K562 (cell line): ENCODE measurements at regions of chr19 and their contacts with region 1.

Region 1: GRCh38 chr19:17419621-17420466 is at the start of gene MVB12A:
- DNase-seq: peak; percentile 97 to 99 (median 98)
- ATAC-seq: peak; percentile 96
- H3K4me3 ChIP-seq: peak within 1 kb of the TSS; percentile 70
- H3K27ac ChIP-seq: peak within 1 kb of the TSS; percentile 72
- H3K4me1 ChIP-seq: peaks cover 7 to 26% of the 10 kb centered on the region in 2 experiments; a peak in 3 of 5 replicates
- H3K27me3 ChIP-seq: no peaks in the 10 kb centered on the region
- CTCF ChIP-seq: 0 out of 6 replicates have a peak, but pooled peaks of 1 of the 3 experiments have one; percentile 0
- EP300 ChIP-seq: no peak
- POLR2A ChIP-seq: peak; percentile 69
- RAD21 ChIP-seq: no peak
- polyA plus RNA-seq, gene MVB12A: 1.2 to 1.7 TPM

Region 2: GRCh38 chr19:17394891-17395415 is 24.9 kb before region 1 on chr19:
- CTCF ChIA-PET with region 1: interaction called, 10 read pairs
- POLR2A ChIA-PET with region 1: interaction called, 3 read pairs
- in situ Hi-C with region 1: no loop called
- intact Hi-C with region 1: loop called (anchors 2 kb)
- DNase-seq: peak; percentile 83 to 91 (median 85)
- ATAC-seq: peak; percentile 72
- H3K4me3 ChIP-seq: no peak overlapping the region
- H3K27ac ChIP-seq: no peak overlapping the region; the same call in 1 of the 3 replicates
- H3K4me1 ChIP-seq: peaks cover 30 to 50% of the 10 kb centered on the region in 2 experiments
- H3K27me3 ChIP-seq: no peaks in the 10 kb centered on the region
- CTCF ChIP-seq: peak; percentile 83 to 88 (median 85)
- EP300 ChIP-seq: peak; percentile 37; the same call in 1 of the 2 replicates
- POLR2A ChIP-seq: peak; percentile 47; the same call in 1 of the 2 replicates
- RAD21 ChIP-seq: peak; percentile 85 to 94

Region 3: DNA sequence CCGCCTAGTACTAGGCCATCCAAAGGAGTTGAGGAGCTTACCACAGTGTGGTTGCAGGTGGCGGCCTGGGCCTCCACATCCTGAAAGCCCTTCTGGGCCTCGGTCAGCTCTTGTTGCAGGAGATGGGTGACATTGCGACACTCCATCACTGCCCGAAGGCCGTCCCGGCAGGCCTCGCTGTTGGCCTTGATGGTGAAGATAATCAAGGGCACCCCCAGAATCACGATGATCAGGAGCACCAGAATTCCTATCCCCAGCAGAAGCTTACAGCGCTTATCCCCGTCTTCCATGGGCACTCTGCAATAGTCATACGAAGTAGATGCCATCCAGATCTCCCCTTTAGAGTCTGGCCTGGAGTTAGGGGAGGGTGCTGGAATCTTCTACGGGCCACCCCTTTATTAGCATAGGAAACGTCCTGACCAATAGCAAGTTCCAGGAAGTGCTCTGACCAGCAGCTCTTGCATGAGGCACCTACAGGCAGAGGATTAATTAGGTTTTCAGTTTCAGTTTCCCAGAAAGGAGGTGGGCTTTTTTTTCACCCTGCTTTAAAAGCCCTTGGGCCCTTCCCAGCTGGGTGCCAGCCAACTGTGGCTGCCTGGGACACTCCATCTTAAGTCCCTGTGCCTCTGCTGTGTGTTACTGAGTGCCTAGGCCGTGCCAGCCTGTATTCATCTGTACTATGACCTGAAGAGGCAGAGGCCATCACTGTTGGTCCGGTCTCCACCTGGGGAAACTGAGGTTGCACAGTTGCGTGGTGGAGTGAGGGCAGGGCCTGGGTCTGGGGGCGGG is 14.4 kb before region 1 on chr19 and contains the start of gene BST2:
- CTCF ChIA-PET with region 1: no interaction called
- POLR2A ChIA-PET with region 1: interaction called, 20 read pairs
- in situ Hi-C with region 1: no loop called
- intact Hi-C with region 1: loop called (anchors 1 kb)
- DNase-seq: peak; percentile 73 to 92 (median 84)
- ATAC-seq: peak; percentile 91
- H3K4me3 ChIP-seq: peak within 1 kb of the TSS; percentile 53
- H3K27ac ChIP-seq: peak within 1 kb of the TSS; percentile 69
- H3K4me1 ChIP-seq: peaks cover 12 to 36% of the 10 kb centered on the region in 2 experiments; a peak in 4 of 5 replicates
- H3K27me3 ChIP-seq: no peaks in the 10 kb centered on the region
- CTCF ChIP-seq: no peak
- EP300 ChIP-seq: no peak
- POLR2A ChIP-seq: peak; percentile 91
- RAD21 ChIP-seq: no peak
- polyA plus RNA-seq, gene BST2: 11.2 to 69.8 TPM

Region 4: GRCh38 chr19:17436094-17436873 is 16.4 kb after region 1 on chr19:
- CTCF ChIA-PET with region 1: no interaction called
- POLR2A ChIA-PET with region 1: no interaction called
- in situ Hi-C with region 1: no loop called
- intact Hi-C with region 1: no loop called
- DNase-seq: no peak
- ATAC-seq: no peak
- H3K4me3 ChIP-seq: no peak overlapping the region
- H3K27ac ChIP-seq: no peak overlapping the region
- H3K4me1 ChIP-seq: peaks cover 0 to 6% of the 10 kb centered on the region in 2 experiments; a peak in 2 of 5 replicates
- H3K27me3 ChIP-seq: peaks cover 0 to 23% of the 10 kb centered on the region in 2 experiments; a peak in 4 of 5 replicates
- CTCF ChIP-seq: no peak
- EP300 ChIP-seq: no peak
- POLR2A ChIP-seq: no peak
- RAD21 ChIP-seq: no peak